ENCODE measurements at regions of chr11 and their contacts with region 1.

Region 1: DNA sequence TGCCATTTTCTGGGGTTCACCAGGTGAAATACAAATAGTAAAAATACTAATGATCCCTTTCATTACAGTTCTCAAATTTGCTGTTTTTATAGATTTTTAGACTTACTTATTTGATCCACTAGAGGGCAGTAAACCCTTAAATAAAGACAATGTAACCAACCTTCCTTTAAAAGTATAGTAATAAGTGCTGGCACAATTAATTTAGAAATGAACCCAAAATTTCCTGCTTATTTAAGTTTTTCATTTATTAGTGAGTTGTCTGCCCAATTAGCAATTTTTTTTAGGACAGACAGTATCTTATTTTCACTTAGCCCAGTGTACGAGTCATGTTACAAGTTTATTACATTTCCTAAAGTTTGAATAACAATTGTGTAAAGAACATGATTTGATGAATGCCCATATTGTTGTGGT is 4.7 kb downstream of the DDIAS start:
- DNase-seq: peak; percentile 64
- ATAC-seq: no peak
- H3K4me3 ChIP-seq: no peak overlapping the region
- H3K27ac ChIP-seq: no peak overlapping the region
- H3K4me1 ChIP-seq: peaks cover 18% of the 10 kb centered on the region
- H3K27me3 ChIP-seq: no peaks in the 10 kb centered on the region
- CTCF ChIP-seq: peak; percentile 89

Region 2: GRCh38 chr11:82750643-82751139 is 155.6 kb before region 1 on chr11:
- CTCF ChIA-PET with region 1: no interaction called
- POLR2A ChIA-PET with region 1: no interaction called
- intact Hi-C with region 1: no loop called
- DNase-seq: no peak
- ATAC-seq: no peak
- H3K4me3 ChIP-seq: no peak overlapping the region
- H3K27ac ChIP-seq: no peak overlapping the region
- H3K4me1 ChIP-seq: no peaks in the 10 kb centered on the region
- H3K27me3 ChIP-seq: peaks cover 29% of the 10 kb centered on the region; the same call in 1 of the 2 replicates
- CTCF ChIP-seq: no peak

Region 3: GRCh38 chr11:82845356-82846353 is 60.6 kb before region 1 on chr11:
- CTCF ChIA-PET with region 1: no interaction called
- POLR2A ChIA-PET with region 1: no interaction called
- intact Hi-C with region 1: no loop called
- DNase-seq: no peak
- ATAC-seq: no peak
- H3K4me3 ChIP-seq: no peak overlapping the region
- H3K27ac ChIP-seq: no peak overlapping the region
- H3K4me1 ChIP-seq: peaks cover 15% of the 10 kb centered on the region
- H3K27me3 ChIP-seq: no peaks in the 10 kb centered on the region
- CTCF ChIP-seq: no peak

Region 4: GRCh38 chr11:82927254-82927880 is 21.1 kb after region 1 on chr11:
- CTCF ChIA-PET with region 1: interaction called, 6 read pairs
- POLR2A ChIA-PET with region 1: interaction called, 3 read pairs
- intact Hi-C with region 1: loop called (anchors 1 kb)
- DNase-seq: peak; percentile 80
- ATAC-seq: peak; percentile 89
- H3K4me3 ChIP-seq: no peak overlapping the region
- H3K27ac ChIP-seq: no peak overlapping the region
- H3K4me1 ChIP-seq: no peaks in the 10 kb centered on the region
- H3K27me3 ChIP-seq: no peaks in the 10 kb centered on the region
- CTCF ChIP-seq: peak; percentile 94

Region 5: GRCh38 chr11:83087035-83087434 is 180.8 kb after region 1 on chr11:
- CTCF ChIA-PET with region 1: no interaction called
- POLR2A ChIA-PET with region 1: no interaction called
- intact Hi-C with region 1: loop called (anchors 2 kb)
- DNase-seq: peak; percentile 62
- ATAC-seq: peak; percentile 74
- H3K4me3 ChIP-seq: no peak overlapping the region
- H3K27ac ChIP-seq: no peak overlapping the region
- H3K4me1 ChIP-seq: peaks cover 1% of the 10 kb centered on the region
- H3K27me3 ChIP-seq: no peaks in the 10 kb centered on the region
- CTCF ChIP-seq: peak; percentile 69

Region 6: GRCh38 chr11:83181815-83182214 is 275.6 kb after region 1 on chr11:
- CTCF ChIA-PET with region 1: no interaction called
- POLR2A ChIA-PET with region 1: no interaction called
- intact Hi-C with region 1: loop called (anchors 5 kb)
- DNase-seq: peak; percentile 41
- ATAC-seq: peak; percentile 80
- H3K4me3 ChIP-seq: no peak overlapping the region
- H3K27ac ChIP-seq: peak overlapping the region; percentile 14; the same call in 1 of the 2 replicates
- H3K4me1 ChIP-seq: no peaks in the 10 kb centered on the region; the same call in 1 of the 2 replicates
- H3K27me3 ChIP-seq: no peaks in the 10 kb centered on the region
- CTCF ChIP-seq: no peak

Measured in PC-3 (cell line).